ENCODE measurements at regions of chr19 and their contacts with region 1.

Region 1: DNA sequence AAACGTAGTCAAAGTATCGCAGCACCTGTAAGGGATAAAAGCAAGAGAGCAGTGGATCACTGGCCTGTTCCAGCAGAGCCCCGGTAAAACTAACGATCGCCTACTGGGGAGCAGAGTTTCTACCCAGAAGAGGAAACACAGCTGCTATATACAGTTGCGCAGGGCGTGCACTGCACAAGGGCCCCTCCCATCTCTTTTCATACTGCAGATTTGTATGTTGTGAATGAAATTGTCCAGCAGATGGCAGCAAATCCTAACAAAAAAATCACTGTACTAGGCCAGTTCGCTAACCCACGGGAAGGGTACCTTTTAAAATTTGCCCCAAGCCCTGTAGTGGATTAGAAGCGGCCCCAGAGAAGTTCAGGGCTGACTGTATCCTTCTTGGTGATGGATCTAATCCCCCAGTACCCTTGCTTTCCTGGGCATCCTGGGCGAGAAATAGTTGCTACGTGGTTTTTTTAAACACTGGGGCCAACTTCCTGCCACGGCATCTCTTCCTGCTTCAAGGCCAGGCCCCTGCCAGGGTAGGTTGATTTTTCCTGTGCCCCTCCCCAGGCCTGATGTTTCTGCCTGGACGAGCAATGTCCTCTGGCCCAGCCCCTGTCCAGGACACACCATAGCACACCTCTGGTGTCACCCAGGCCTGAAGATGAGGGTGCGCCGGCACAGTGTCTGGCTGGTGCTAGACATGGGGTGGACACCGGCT is 127.0 kb downstream of the IER2 start:
- DNase-seq: peak in 1 of 2 experiments; percentile 72
- H3K4me3 ChIP-seq: no peak overlapping the region
- H3K27ac ChIP-seq: no peak overlapping the region
- H3K4me1 ChIP-seq: peaks cover 0 to 4% (median 1%) of the 10 kb centered on the region in 4 experiments; a peak in 3 of 7 replicates
- H3K27me3 ChIP-seq: no peaks in the 10 kb centered on the region
- CTCF ChIP-seq: peak; percentile 3 to 77 (median 67)
- EP300 ChIP-seq: no peak
- POLR2A ChIP-seq: no peak
- RAD21 ChIP-seq: peak; percentile 83 to 87

Region 2: GRCh38 chr19:13262450-13262849 is 14.8 kb before region 1 on chr19:
- CTCF ChIA-PET with region 1: interaction called, 11 read pairs
- POLR2A ChIA-PET with region 1: no interaction called
- DNase-seq: no peak
- H3K4me3 ChIP-seq: no peak overlapping the region
- H3K27ac ChIP-seq: no peak overlapping the region
- H3K4me1 ChIP-seq: no peaks in the 10 kb centered on the region
- H3K27me3 ChIP-seq: no peaks in the 10 kb centered on the region
- CTCF ChIP-seq: peak in 2 of 3 experiments; percentile 12 to 49; a peak in 2 of 4 replicates
- EP300 ChIP-seq: no peak
- POLR2A ChIP-seq: no peak
- RAD21 ChIP-seq: peak; percentile 27 to 40; a peak in 3 of 4 replicates

Region 3: DNA sequence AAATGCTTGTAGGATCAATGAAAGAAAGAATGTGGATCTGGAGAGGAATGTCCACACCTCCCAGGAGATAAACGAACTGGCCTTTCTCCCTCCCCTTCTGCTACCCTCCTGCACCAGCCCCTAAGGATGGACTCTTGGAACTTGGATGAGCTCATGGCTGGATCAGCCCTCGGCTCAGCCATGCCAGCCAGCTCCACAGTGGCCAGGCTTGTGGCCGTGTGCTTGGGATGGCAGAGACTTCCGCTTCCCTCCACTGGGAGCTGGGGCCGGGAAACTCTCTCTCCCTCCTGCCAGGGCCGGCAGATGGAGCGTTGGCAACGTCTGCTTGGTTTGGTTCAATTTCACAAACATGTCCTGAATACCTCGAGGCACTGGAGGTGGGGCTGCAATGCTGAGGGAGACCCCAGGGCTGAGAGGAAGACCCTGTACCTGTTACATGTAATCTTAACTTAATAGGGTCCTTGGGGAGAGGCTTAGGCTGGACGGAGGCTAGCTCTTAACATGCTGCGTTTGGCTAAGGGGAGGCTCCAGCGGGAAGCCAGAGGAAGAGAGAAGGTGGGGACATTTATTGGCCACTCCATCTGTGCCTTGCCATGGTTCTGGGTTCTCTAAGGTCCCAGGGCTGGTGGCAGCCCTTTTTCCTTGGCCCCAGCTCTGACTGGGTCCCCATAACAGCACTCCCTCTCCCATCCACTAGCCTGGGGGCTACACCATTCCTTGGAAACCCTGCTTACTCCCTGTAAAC is 25.4 kb after region 1 on chr19:
- CTCF ChIA-PET with region 1: interaction called, 22 read pairs
- POLR2A ChIA-PET with region 1: no interaction called
- DNase-seq: no peak
- H3K4me3 ChIP-seq: no peak overlapping the region
- H3K27ac ChIP-seq: no peak overlapping the region
- H3K4me1 ChIP-seq: no peaks in the 10 kb centered on the region
- H3K27me3 ChIP-seq: no peaks in the 10 kb centered on the region
- CTCF ChIP-seq: no peak
- EP300 ChIP-seq: no peak
- POLR2A ChIP-seq: no peak
- RAD21 ChIP-seq: no peak

Region 4: DNA sequence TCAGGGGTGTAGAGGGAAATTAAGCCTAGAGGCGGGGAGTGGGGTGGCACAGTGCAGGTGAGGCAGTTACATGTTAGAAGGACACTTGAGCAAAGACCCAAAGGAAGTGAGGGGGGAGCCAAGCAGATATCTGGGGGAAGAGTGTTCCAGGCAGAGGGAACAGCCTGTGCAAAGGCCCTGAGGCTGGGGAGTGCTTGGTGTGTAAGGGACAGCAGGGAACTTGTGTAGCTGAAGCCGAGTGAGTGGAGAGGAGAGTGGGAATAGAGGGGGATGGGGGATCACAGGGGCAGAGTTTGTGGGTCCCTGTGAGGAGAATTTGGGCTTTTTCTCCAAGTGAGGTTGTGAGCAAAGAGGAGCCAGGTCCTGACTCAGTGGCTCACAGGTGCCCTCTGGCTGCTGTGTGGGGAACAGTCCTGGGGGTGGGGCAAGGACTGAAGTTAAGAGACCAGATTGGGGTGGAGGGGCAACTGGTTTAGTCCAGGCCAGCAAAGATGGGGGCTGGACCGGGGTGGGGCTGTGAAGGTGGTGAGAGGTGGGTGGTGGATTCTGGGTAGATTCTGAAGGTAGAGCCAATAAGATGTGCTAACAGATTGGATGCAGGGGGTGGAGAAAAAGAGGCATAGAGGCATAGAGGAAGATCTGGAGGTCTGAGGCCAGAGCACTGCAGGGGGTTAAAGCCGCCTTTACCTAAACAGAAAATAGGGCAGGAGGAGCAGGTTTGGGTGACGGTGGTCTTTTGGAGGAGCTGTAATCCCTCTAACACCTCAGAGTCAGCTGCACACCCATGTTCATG is 153.7 kb after region 1 on chr19:
- CTCF ChIA-PET with region 1: interaction called, 49 read pairs
- POLR2A ChIA-PET with region 1: no interaction called
- DNase-seq: peak in 1 of 2 experiments; percentile 85
- H3K4me3 ChIP-seq: no peak overlapping the region
- H3K27ac ChIP-seq: no peak overlapping the region
- H3K4me1 ChIP-seq: no peaks in the 10 kb centered on the region
- H3K27me3 ChIP-seq: no peaks in the 10 kb centered on the region
- CTCF ChIP-seq: peak; percentile 84 to 92 (median 86)
- EP300 ChIP-seq: no peak
- POLR2A ChIP-seq: no peak
- RAD21 ChIP-seq: peak; percentile 71 to 82

Region 5: DNA sequence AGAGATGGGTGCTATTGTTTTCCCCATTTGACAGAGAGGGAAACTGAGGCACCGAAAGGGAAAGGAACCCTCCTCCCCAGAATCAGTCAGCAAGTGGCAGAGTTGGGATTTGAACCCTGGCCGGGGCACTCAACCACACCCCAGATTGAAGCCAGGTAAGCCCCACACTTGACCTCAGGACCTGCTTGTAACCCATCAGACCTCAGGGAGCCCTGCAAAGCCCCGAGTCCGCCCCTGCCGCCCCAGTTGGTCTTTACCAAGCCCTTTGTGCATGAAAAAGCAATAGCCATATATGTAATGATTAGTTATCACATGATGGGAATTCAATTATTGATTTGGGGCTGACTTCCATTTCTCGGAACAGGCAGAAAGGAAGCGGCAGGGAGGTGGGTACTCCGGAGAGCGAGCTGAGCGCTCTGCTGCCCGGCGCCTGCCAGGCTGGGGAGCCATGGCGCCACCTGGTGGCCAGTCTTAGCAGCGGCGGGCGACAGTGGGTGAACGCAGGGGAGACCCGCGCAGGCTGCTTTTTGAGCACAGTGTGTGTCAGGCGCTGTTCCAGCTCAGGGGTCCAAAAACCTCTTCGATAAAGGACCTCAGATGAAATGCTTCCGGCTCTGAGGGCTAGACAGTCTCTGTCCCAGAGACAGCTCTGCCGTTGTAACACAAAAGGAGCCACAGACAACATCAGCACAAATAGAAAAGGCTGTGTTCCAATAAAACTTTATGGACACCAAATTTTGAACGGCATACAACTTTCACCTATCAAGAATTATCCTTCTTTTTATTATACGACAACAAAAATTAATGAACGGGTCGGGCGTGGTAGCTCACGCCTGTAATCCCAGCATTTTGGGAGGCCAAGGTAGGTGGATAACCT is 311.9 kb after region 1 on chr19:
- CTCF ChIA-PET with region 1: interaction called, 26 read pairs
- POLR2A ChIA-PET with region 1: no interaction called
- DNase-seq: peak; percentile 36 to 97
- H3K4me3 ChIP-seq: no peak overlapping the region
- H3K27ac ChIP-seq: no peak overlapping the region
- H3K4me1 ChIP-seq: no peaks in the 10 kb centered on the region
- H3K27me3 ChIP-seq: no peaks in the 10 kb centered on the region
- CTCF ChIP-seq: peak; percentile 90 to 95 (median 94)
- EP300 ChIP-seq: no peak
- POLR2A ChIP-seq: no peak
- RAD21 ChIP-seq: peak; percentile 88 to 93